Heart right ventricle (tissue), 16 donors: ENCODE measurements at regions of chr18 and their contacts with region 1.

Region 1: GRCh38 chr18:48538531-48539405 is at the start of gene CTIF:
- DNase-seq: peak; percentile 93 to 97
- ATAC-seq: peak; percentile 89 to 94 (median 91)
- H3K4me3 ChIP-seq: peak within 1 kb of the TSS; percentile 72 to 90 (median 88)
- H3K27ac ChIP-seq: peak within 1 kb of the TSS; percentile 89 to 97 (median 95)
- H3K4me1 ChIP-seq: peaks cover 3 to 34% (median 24%) of the 10 kb centered on the region in 9 donors
- H3K27me3 ChIP-seq: no peaks in the 10 kb centered on the region
- CTCF ChIP-seq: peak in 3 of 9 donors; percentile 7 to 15 (median 14)
- total RNA-seq, gene CTIF: 44.5 to 68.9 (median 58.9) TPM

Region 2: DNA sequence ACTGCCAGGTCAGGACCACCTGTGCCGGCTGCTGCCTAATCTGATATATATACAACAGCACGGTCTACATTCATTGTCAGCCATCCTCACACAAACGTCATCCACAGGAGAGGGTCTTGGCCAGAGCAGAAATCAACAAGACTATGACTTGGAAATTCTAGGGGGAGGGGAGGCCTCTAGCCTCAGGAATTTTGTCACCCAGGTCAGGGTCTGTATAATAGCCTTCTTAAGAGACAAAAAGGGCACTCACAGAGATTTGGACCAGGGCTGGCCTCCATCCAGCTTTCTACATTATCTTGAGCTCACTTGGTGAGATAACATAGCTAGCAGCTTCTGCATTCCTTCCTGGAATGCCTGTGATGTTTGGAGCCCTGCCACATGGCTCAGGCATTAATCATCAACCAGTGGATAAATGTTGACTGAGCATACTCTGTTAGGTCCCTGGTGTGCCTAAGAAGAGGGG is 50.3 kb before region 1 on chr18:
- intact Hi-C with region 1: loop called in 4 of 10 experiments (anchors 5 to 10 kb)
- DNase-seq: peak; percentile 63 to 81
- ATAC-seq: peak; percentile 79 to 95 (median 91)
- H3K4me3 ChIP-seq: no peak overlapping the region
- H3K27ac ChIP-seq: peak overlapping the region in 5 of 10 donors; percentile 46 to 75 (median 72)
- H3K4me1 ChIP-seq: peaks cover 0 to 37% (median 16%) of the 10 kb centered on the region in 9 donors
- H3K27me3 ChIP-seq: no peaks in the 10 kb centered on the region
- CTCF ChIP-seq: no peak

Region 3: GRCh38 chr18:48580782-48581181 is 42.0 kb after region 1 on chr18:
- intact Hi-C with region 1: loop called in 1 of 10 experiments (anchors 5 kb)
- DNase-seq: no peak
- ATAC-seq: peak in 1 of 8 donors; percentile 25
- H3K4me3 ChIP-seq: no peak overlapping the region
- H3K27ac ChIP-seq: no peak overlapping the region
- H3K4me1 ChIP-seq: peaks cover 8 to 54% (median 29%) of the 10 kb centered on the region in 9 donors
- H3K27me3 ChIP-seq: no peaks in the 10 kb centered on the region
- CTCF ChIP-seq: no peak

Region 4: GRCh38 chr18:48605408-48605845 is 66.7 kb after region 1 on chr18:
- intact Hi-C with region 1: loop called in 2 of 10 experiments (anchors 5 kb)
- DNase-seq: no peak
- ATAC-seq: no peak
- H3K4me3 ChIP-seq: no peak overlapping the region
- H3K27ac ChIP-seq: no peak overlapping the region
- H3K4me1 ChIP-seq: peaks cover 8 to 55% (median 47%) of the 10 kb centered on the region in 9 donors
- H3K27me3 ChIP-seq: no peaks in the 10 kb centered on the region
- CTCF ChIP-seq: peak in 2 of 9 donors; percentile 17 to 20

Region 5: DNA sequence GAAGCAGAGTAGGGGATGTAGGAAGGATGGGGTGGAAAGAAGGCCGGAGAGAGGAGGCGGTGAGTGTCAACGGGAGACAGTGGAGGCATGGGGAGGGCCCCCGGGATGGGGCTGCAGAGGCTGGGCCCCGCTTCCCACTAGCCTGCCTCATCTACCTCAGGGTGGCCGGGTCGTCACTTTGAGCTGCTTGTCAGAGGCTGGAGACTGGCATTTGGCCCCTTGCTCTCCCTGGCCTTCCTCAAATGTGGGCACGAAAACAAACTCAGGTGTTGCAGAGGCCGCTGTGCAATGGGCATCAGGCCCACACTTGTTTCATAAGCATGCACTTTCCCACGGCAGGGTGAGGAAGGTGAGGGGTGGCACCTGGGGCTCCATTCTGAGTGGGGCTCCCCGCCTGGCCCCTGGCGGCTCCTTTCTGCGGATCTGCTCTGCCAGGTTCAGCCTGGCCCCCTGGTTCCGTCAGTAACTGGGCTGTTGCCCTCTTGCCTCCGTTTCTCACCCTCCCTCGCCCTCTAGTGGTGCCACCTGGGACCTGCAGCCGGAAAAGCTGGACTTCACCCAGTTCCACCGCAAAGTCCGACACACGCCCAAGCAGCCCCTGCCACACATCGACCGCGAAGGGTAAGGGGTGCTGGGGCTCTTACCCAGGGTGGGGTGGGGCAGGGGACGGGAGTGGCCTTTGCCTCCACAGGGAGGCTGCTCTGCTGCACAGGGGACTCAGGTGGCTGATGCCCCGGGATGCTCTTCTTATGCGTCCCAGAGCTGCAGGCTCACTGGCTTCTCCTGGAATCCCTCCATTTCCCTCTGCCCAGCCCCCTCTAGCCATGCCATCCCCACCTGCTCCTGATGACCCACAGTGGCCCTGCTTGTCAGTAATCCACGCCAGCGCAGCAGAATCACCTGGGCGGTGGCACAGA is 125.4 kb after region 1 on chr18:
- intact Hi-C with region 1: loop called in 4 of 10 experiments (anchors 5 to 10 kb)
- DNase-seq: peak; percentile 68 to 76
- ATAC-seq: peak; percentile 34 to 78 (median 66)
- H3K4me3 ChIP-seq: no peak overlapping the region
- H3K27ac ChIP-seq: no peak overlapping the region
- H3K4me1 ChIP-seq: peaks cover 0 to 39% (median 24%) of the 10 kb centered on the region in 9 donors
- H3K27me3 ChIP-seq: no peaks in the 10 kb centered on the region
- CTCF ChIP-seq: peak; percentile 84 to 93 (median 88)